GM18951 (cell line): ENCODE measurements at regions of chr3 and their contacts with region 1.

Region 1: GRCh38 chr3:185988080-185988815 is 50.4 kb upstream of the TRA2B start:
- POLR2A ChIP-seq: no peak

Region 2: DNA sequence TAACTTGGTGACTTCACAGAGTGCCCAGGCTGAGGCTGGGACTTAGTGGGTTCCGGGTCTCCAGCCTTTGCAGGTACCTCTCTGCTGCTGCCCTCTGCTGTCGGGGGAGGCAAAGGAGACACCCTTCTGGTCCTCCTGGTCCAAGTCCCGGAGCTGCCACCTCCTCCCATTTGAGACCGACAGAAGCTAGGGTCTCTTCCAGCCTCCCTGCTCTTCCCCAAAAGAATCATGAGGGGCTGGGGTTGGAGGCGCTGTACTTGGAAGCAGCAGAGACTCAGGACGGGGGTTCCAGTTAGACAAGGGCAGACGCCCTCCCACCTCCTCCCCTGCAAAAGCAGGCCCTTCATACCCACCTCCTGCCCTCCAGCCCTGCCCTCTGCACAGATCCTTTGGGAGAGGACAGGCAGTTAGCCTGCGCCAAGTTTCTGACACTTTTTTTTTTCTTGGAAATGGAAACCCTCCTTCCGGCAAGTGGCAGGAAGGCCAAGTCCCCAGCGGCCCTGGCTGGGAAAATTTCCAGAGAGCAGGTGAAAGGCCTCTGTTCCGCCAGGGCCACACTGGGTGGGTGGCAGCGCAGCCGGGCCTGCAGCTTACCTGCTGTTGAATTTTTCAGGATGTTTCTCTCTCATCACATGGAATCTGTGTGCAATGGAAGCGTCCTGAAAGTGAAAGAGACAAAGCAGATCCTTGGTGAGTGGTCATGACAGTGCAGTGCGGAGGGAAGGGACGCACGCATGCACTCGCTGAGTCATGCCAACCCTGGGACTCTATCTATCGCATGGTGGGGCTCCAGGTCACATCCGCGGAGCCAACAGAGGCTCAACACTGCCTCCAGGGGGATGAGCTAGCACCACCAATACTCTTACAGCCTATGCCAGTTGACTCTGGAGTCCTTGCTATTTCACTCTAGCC is 253.9 kb after region 1 on chr3:
- in situ Hi-C with region 1: loop called (anchors 5 kb)
- POLR2A ChIP-seq: no peak

Region 3: DNA sequence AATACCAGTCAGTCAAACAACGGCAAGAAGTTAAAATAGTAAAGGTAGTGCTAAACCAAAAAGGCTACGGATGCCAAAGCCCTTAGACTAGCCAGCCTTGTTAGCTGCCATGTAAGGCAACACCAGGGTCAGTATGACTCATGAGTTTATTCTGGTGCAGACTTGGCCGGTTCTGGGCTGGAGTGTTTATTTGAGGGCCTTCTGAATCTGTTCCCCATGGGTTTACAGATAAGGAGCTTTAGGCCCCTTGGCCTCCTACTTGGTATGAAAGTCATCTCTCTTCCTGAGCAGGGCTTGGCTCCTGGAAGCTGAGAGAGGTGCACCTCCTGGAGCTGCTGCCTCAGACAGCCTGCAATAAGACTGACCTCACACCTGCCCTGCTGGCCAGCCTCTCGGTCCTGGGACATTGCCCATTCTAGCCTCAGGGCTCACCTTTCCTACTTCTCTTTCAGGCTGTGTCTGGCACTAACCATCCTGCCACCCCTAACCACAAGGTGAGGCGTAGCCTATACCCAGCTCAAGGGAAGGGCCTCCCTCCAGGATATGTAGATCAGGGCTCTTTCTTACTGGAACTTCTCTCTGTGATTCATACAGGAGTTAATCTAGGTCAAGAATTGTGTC is 1198.7 kb after region 1 on chr3:
- in situ Hi-C with region 1: no loop called
- POLR2A ChIP-seq: no peak